ENCODE measurements at regions of chr17 and their contacts with region 1.

Region 1: DNA sequence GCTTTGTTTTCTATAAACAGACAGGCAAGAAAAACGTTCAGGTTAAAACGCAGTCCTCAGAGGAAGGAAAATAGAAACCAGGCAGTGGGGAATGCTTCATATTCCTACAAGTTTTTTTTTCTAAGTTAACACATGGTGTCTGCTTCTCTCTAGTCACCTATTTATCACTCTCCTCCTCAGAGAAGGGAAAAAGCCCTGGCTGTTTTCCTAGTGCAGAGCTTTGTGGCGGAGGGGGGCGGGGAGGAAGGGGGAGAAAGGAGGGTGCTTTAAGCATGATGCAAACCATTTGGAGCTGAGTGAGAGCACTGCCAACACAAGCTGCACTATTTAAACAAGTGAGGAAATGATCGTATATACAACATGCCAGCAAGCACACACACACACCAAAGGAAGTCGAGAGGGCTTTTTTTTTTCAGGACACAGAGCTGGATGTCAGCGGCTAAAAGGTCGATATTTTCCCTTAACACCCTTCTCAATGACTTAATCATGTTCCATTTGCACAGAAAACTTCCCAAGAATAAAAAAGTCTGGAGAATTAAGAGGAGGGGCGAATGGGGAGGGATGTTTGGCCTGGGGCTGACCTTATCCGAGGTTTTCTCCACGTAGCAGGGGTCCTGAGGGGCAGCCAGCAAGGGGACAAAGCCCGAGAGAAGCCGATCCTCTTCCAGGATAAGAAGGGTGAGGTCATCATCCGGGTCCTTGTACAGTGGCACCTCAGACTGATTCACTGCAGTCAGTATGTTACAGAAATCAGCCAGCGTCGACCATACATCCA is 117.4 kb downstream of the HIC1 start:
- DNase-seq: peak; percentile 72 to 91
- ATAC-seq: peak; percentile 64 to 83 (median 80)
- H3K4me3 ChIP-seq: peak overlapping the region in 8 of 10 donors; percentile 10 to 38 (median 21)
- H3K27ac ChIP-seq: peak overlapping the region; percentile 52 to 96 (median 88)
- H3K4me1 ChIP-seq: peaks cover 41 to 82% (median 64%) of the 10 kb centered on the region in 9 donors
- H3K27me3 ChIP-seq: no peaks in the 10 kb centered on the region
- CTCF ChIP-seq: no peak

Region 2: GRCh38 chr17:2054512-2055291 is 117.6 kb before region 1 on chr17 and contains the start of gene HIC1:
- intact Hi-C with region 1: loop called in 4 of 10 experiments (anchors 5 to 10 kb)
- DNase-seq: peak; percentile 79 to 85
- ATAC-seq: peak; percentile 57 to 71 (median 60)
- H3K4me3 ChIP-seq: peak within 1 kb of the TSS; percentile 50 to 83 (median 72)
- H3K27ac ChIP-seq: peak within 1 kb of the TSS; percentile 78 to 97 (median 93)
- H3K4me1 ChIP-seq: peaks cover 22 to 69% (median 53%) of the 10 kb centered on the region in 9 donors
- H3K27me3 ChIP-seq: peaks cover 0 to 80% (median 17%) of the 10 kb centered on the region in 7 donors
- CTCF ChIP-seq: peak; percentile 93 to 99 (median 98)
- total RNA-seq, gene HIC1: 3.5 to 37.5 (median 12.1) TPM

Region 3: DNA sequence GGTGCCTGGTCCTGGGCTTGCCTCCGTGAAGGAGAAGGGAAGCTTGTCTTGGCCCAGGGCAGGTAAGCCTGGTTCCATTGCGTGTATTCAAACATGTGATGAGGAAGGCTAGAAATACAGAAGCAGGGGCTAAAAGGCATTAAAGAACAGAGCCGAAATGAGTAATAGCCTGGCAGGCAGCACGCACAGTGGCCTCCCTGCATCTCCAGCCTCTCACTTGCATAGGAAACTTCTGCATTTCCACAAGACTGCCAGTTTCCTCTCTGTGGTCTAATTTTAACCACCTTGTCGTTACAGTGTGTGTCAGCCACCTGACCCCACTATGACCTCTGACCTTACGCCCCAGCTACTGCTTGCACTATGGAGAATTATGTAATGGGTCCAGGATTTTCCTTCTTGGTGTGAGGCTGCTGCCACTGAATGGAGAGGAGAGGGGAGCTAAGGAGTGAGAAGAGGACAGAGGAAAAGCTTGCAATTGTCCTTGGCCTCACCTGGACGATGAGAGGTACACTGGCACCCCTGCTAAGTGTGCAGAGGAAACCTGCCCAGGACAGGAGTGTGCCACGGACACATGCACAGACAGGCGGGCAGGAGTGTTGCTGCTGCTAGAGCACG is 84.6 kb before region 1 on chr17:
- intact Hi-C with region 1: loop called in 3 of 10 experiments (anchors 5 to 10 kb)
- DNase-seq: peak in 1 of 2 donors; percentile 67
- ATAC-seq: peak in 2 of 8 donors; percentile 4 to 5
- H3K4me3 ChIP-seq: no peak overlapping the region
- H3K27ac ChIP-seq: peak overlapping the region in 9 of 10 donors; percentile 88 to 97 (median 92)
- H3K4me1 ChIP-seq: peaks cover 51 to 98% (median 89%) of the 10 kb centered on the region in 9 donors
- H3K27me3 ChIP-seq: no peaks in the 10 kb centered on the region
- CTCF ChIP-seq: no peak

Region 4: DNA sequence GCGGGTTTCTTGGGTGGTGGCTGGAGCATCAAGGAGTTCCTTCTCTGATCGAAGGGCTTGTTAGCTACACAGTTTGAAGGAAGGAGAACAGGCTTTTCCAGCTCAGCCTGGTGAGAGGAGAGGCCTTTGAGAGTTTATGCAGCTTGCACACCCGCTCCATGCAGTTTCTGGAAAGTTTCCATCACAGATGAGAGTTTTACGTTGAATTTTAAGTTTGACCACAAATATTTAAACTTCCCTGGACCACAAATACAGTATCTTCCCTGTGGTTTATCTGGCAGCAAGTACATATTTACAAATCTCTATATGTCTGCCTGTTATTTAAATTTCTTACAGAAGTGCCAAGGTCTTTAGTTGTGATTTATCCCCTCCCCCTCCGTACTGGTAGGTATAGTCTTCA is 60.5 kb before region 1 on chr17:
- intact Hi-C with region 1: loop called in 2 of 10 experiments (anchors 5 to 10 kb)
- DNase-seq: no peak
- ATAC-seq: no peak
- H3K4me3 ChIP-seq: no peak overlapping the region
- H3K27ac ChIP-seq: no peak overlapping the region
- H3K4me1 ChIP-seq: peaks cover 7 to 21% (median 15%) of the 10 kb centered on the region in 9 donors
- H3K27me3 ChIP-seq: no peaks in the 10 kb centered on the region
- CTCF ChIP-seq: no peak

Region 5: DNA sequence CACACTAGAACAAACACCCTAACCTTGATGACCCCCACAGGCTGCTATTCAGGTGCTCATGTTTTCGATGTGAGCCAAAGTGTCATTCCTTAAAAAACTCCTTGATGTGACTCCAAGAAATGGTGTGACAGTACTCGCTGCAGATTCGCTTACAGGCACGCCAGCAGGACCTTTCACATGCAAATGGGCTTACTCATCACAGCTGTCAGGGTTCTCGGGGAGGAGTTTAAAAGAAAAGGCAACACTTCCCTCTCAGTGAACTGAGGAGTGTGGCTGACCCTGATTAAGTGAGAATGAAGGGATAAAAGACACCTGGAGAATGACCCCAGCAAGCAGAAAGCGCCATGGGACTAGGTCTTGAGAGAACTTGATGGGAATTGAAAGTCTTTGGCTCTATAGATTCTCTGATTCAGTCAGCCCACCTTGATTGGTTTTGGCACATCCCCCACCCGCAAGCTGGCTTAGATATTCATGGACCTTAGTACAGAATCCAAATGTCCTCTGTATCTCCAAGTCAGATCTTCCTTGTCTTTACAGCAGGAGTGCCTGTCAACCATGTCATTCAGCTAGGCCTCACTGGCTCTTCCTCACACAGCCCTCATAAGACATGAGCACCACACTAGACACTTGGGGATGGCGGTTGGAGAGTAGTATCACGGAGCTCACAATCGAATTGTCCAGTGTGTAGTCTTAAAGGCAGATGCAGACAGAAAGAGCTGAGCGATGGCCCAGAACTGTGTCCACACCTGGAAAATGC is 34.7 kb before region 1 on chr17:
- intact Hi-C with region 1: loop called in 1 of 10 experiments (anchors 5 kb)
- DNase-seq: no peak
- ATAC-seq: peak in 1 of 8 donors; percentile 48
- H3K4me3 ChIP-seq: no peak overlapping the region
- H3K27ac ChIP-seq: peak overlapping the region in 3 of 10 donors; percentile 33 to 65 (median 42)
- H3K4me1 ChIP-seq: peaks cover 8 to 31% (median 17%) of the 10 kb centered on the region in 9 donors
- H3K27me3 ChIP-seq: no peaks in the 10 kb centered on the region
- CTCF ChIP-seq: no peak

Region 6: GRCh38 chr17:2215616-2216364 is 43.5 kb after region 1 on chr17:
- intact Hi-C with region 1: loop called in 5 of 10 experiments (anchors 2 to 5 kb)
- DNase-seq: peak; percentile 72 to 81
- ATAC-seq: peak; percentile 73 to 84 (median 81)
- H3K4me3 ChIP-seq: peak overlapping the region in 9 of 10 donors; percentile 10 to 48 (median 38)
- H3K27ac ChIP-seq: peak overlapping the region; percentile 82 to 97 (median 90)
- H3K4me1 ChIP-seq: peaks cover 18 to 70% (median 52%) of the 10 kb centered on the region in 9 donors
- H3K27me3 ChIP-seq: no peaks in the 10 kb centered on the region
- CTCF ChIP-seq: peak in 2 of 9 donors; percentile 6 to 18

Region 7: GRCh38 chr17:2401426-2402221 is 229.4 kb after region 1 on chr17:
- intact Hi-C with region 1: loop called in 1 of 10 experiments (anchors 10 kb)
- DNase-seq: peak; percentile 100
- ATAC-seq: peak; percentile 56 to 80 (median 74)
- H3K4me3 ChIP-seq: peak overlapping the region; percentile 10 to 99 (median 89)
- H3K27ac ChIP-seq: peak overlapping the region; percentile 92 to 100 (median 98)
- H3K4me1 ChIP-seq: peaks cover 28 to 70% (median 66%) of the 10 kb centered on the region in 9 donors
- H3K27me3 ChIP-seq: no peaks in the 10 kb centered on the region
- CTCF ChIP-seq: no peak

Measured in heart right ventricle (tissue), 16 donors.